Calu3 (cell line): ENCODE measurements at regions of chr15 and their contacts with region 1.

Region 1: DNA sequence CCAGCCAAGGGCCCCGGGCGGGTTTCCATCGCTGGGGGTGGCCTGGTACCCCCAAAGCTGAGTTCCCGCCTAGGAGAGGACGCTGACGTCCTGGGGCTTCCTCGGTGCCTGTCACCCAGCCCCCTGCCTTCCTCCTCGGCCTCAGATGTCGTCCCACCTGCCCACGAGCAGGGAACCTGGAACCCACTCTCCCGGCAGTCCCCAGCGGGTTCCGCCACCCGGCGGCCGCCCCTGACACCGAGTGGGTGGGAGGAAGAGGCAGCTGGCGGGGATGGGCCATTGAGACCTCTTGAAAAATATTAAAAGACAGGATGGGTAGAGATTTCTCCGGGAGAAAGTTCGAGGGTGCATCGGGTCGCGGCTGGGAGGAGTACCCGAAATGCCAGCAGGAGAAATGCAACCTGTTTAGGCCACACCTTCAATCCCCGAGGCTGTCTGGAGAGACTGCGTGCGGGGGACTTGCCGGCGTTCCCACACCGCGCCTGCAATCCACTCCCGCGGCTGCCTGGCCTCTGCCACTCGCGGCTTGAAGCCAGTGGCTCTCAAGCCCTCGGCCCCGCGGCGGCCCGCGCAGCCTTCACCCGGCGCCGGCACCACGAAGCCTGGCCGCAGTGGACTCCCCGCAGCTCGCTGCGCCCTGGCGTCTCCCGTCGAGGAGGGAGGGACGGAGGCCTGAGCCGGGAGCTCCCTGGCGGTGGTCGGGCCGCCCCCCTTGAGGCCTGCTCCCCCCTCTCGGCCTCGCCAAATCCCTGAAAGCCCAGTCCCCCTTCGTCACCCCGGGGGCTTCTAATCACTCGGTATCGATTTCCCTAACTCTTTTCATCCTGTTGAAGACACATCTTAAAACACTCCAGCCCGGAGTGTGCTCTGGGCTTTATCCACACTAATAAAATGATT is 8.6 kb upstream of the NR2F2 start:
- DNase-seq: peak; percentile 63
- H3K4me3 Mint-ChIP-seq: no peak overlapping the region
- H3K27ac Mint-ChIP-seq: peak overlapping the region; percentile 98
- H3K4me1 Mint-ChIP-seq: peaks cover 38% of the 10 kb centered on the region
- H3K27me3 Mint-ChIP-seq: no peaks in the 10 kb centered on the region
- CTCF ChIP-seq: no peak

Region 2: DNA sequence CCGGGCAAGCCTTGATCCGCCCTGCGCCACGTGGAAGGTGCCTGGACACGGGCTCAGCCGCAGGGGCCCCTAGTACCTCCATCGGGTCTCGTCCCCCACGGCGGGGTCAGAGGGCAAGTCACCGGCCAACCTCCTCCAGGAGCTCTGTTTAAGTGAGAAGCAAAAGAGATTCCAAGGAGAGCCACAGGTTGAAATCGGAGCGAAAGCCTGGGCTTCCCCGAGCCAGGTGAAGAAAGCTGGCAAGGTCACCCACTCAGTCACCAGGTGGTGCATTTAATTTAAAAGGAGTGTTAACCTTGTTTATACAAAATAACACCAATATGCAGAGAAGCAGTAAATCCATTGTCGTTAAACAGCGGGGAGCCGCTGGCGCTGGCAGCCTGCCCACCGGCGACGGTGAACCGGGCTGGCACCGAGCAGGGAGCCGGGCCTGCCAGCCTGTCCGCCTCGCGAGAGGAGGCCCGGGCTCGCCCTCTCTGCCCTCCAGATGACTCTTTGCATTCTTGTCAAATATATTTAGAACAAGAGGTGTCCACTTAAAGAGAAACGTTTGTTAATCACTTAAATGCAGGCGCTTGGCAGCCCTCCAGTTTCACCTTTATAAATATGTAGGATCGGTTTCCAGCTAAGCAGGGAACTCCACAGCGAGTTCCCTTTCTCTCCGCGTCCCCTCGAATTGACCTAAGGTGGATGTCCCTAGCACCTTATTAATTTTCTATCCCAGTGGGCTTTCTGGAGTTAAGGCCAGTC is 268.7 kb before region 1 on chr15:
- CTCF ChIA-PET with region 1: interaction called, 5 read pairs
- intact Hi-C with region 1: loop called (anchors 1 kb)
- DNase-seq: peak; percentile 75
- H3K4me3 Mint-ChIP-seq: peak overlapping the region; percentile 67
- H3K27ac Mint-ChIP-seq: peak overlapping the region; percentile 93
- H3K4me1 Mint-ChIP-seq: peaks cover 25% of the 10 kb centered on the region
- H3K27me3 Mint-ChIP-seq: no peaks in the 10 kb centered on the region
- CTCF ChIP-seq: no peak

Region 3: GRCh38 chr15:96230465-96231181 is 91.3 kb before region 1 on chr15:
- CTCF ChIA-PET with region 1: interaction called, 7 read pairs
- intact Hi-C with region 1: loop called (anchors 2 kb)
- DNase-seq: no peak
- H3K4me3 Mint-ChIP-seq: no peak overlapping the region
- H3K27ac Mint-ChIP-seq: peak overlapping the region; percentile 84
- H3K4me1 Mint-ChIP-seq: peaks cover 65% of the 10 kb centered on the region
- H3K27me3 Mint-ChIP-seq: no peaks in the 10 kb centered on the region
- CTCF ChIP-seq: no peak

Region 4: GRCh38 chr15:96345560-96346399 is 23.9 kb after region 1 on chr15:
- CTCF ChIA-PET with region 1: interaction called, 121 read pairs
- intact Hi-C with region 1: loop called (anchors 1 kb)
- DNase-seq: peak; percentile 80
- H3K4me3 Mint-ChIP-seq: no peak overlapping the region
- H3K27ac Mint-ChIP-seq: no peak overlapping the region
- H3K4me1 Mint-ChIP-seq: peaks cover 70% of the 10 kb centered on the region
- H3K27me3 Mint-ChIP-seq: no peaks in the 10 kb centered on the region
- CTCF ChIP-seq: peak; percentile 66

Region 5: GRCh38 chr15:96553006-96553405 is 231.1 kb after region 1 on chr15:
- CTCF ChIA-PET with region 1: no interaction called
- intact Hi-C with region 1: no loop called
- DNase-seq: no peak
- H3K4me3 Mint-ChIP-seq: no peak overlapping the region
- H3K27ac Mint-ChIP-seq: no peak overlapping the region
- H3K4me1 Mint-ChIP-seq: peaks cover 8% of the 10 kb centered on the region
- H3K27me3 Mint-ChIP-seq: peaks cover 20% of the 10 kb centered on the region
- CTCF ChIP-seq: no peak